CD14-positive monocyte (primary cell): ENCODE measurements at regions of chrX and their contacts with region 1.

Region 1: DNA sequence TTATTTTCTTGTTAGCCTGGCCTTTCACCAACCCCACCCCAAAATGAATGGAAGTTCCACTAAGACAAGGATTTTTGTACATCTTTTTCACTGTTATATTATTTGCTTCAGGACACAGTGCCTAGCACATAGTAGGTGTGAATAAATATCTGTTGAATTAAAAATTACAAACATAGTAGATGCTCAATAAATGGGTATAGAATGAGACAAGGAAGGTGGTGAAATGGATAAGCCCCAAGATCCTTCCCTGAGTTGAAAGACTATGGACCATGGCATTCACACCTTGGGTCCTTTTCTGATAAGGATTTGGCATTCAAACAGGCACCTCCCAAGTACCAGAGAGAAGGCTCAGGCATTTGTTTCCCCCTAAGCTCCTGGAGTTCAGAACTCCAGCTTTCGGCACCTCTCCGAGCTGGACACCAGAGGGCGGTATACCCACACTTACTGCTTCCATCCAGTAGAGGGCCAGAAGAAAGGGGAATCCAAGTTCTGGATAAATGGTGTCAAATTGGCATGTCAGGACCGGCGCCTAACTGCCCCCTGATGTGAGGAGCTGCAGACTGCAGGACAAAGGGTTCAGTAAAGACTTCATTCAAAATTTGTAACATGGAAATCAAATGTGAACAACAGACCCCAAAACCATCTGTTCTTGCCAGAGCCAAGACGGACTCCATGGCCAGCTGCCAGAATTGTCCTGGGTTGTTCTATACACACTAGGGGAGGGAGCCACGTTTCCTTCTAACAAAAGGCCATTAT is 193.0 kb downstream of the GPC3 start:
- DNase-seq: peak; percentile 32 to 47 (median 40)
- H3K4me3 ChIP-seq: no peak overlapping the region
- H3K4me3 Mint-ChIP-seq: peak overlapping the region in 1 of 2 donors; percentile 39
- H3K27ac ChIP-seq: no peak overlapping the region
- H3K27ac Mint-ChIP-seq: no peak overlapping the region
- H3K4me1 ChIP-seq: no peaks in the 10 kb centered on the region
- H3K4me1 Mint-ChIP-seq: peaks cover 2% of the 10 kb centered on the region
- H3K27me3 ChIP-seq: peaks cover 0 to 4% of the 10 kb centered on the region in 2 donors
- H3K27me3 Mint-ChIP-seq: peaks cover 0 to 5% (median 2%) of the 10 kb centered on the region in 3 donors
- CTCF ChIP-seq: peak; percentile 97

Region 2: DNA sequence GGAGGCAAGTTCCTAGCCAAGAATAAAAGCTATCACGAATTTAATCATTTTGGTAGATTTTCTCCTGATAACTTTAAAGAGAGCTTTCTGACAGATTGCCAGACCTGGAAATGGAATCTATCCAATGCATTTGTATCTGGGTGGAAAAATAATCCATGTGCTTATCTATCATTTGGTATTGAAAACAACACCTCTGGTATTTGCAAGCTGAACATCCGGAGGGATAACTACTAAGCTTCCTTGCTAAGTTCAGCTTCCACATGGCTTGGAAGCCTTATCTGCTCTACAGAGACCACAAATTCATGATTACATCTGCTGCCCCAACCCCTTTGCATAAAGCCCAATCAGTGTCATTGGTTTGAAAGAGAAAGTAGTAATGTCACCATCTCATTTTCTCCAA is 37.7 kb before region 1 on chrX:
- intact Hi-C with region 1: no loop called
- DNase-seq: no peak
- H3K4me3 ChIP-seq: no peak overlapping the region
- H3K4me3 Mint-ChIP-seq: no peak overlapping the region
- H3K27ac ChIP-seq: no peak overlapping the region
- H3K27ac Mint-ChIP-seq: no peak overlapping the region
- H3K4me1 ChIP-seq: no peaks in the 10 kb centered on the region
- H3K4me1 Mint-ChIP-seq: no peaks in the 10 kb centered on the region
- H3K27me3 ChIP-seq: peaks cover 0 to 4% of the 10 kb centered on the region in 2 donors
- H3K27me3 Mint-ChIP-seq: peaks cover 0 to 2% (median 0%) of the 10 kb centered on the region in 3 donors
- CTCF ChIP-seq: no peak

Region 3: GRCh38 chrX:134396174-134396573 is 603.8 kb after region 1 on chrX:
- intact Hi-C with region 1: loop called in 1 of 2 experiments (anchors 10 kb)
- DNase-seq: peak in 2 of 3 donors; percentile 10 to 21
- H3K4me3 ChIP-seq: no peak overlapping the region
- H3K4me3 Mint-ChIP-seq: no peak overlapping the region
- H3K27ac ChIP-seq: no peak overlapping the region
- H3K27ac Mint-ChIP-seq: no peak overlapping the region
- H3K4me1 ChIP-seq: no peaks in the 10 kb centered on the region
- H3K4me1 Mint-ChIP-seq: peaks cover 1% of the 10 kb centered on the region
- H3K27me3 ChIP-seq: no peaks in the 10 kb centered on the region
- H3K27me3 Mint-ChIP-seq: peaks cover 0 to 1% (median 0%) of the 10 kb centered on the region in 3 donors
- CTCF ChIP-seq: peak; percentile 55